AG04450 (cell line): ENCODE measurements at regions of chr5 and their contacts with region 1.

Region 1: DNA sequence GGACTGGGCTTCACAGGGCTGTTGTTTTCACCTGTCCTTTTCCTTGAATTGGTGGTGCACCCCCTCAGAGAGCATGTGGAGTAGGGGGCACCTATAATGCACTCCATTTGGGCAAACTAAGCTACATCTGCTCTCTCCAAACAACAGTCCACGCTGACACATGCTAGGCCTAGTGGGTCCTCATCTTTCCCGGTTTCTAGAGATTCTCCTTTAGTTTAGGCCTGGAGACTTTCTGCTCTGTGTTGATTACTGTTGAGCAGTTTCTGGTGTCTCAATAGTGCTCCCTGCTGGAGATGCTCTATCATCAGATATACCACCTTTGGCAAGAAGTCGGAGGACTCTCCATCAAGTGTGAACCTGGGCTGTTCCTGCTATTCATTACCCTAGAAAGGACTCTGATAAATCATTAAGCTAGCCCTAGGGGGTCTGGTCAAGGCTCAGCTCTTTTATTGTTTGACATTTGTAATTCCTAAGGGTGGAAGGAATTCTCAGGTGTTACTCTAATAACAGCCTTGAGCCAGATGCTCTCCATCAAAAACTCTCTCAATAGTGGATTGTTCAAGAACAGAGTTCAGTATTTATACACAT is 64.0 kb upstream of the FYB1 start:
- DNase-seq: peak; percentile 29
- H3K4me3 ChIP-seq: no peak overlapping the region
- H3K27ac ChIP-seq: no peak overlapping the region
- H3K27me3 ChIP-seq: no peaks in the 10 kb centered on the region
- CTCF ChIP-seq: peak; percentile 81

Region 2: GRCh38 chr5:37665889-37666288 is 1617.4 kb before region 1 on chr5:
- CTCF ChIA-PET with region 1: no interaction called
- POLR2A ChIA-PET with region 1: no interaction called
- DNase-seq: no peak
- H3K4me3 ChIP-seq: no peak overlapping the region
- H3K27ac ChIP-seq: no peak overlapping the region
- H3K27me3 ChIP-seq: no peaks in the 10 kb centered on the region
- CTCF ChIP-seq: no peak

Region 3: DNA sequence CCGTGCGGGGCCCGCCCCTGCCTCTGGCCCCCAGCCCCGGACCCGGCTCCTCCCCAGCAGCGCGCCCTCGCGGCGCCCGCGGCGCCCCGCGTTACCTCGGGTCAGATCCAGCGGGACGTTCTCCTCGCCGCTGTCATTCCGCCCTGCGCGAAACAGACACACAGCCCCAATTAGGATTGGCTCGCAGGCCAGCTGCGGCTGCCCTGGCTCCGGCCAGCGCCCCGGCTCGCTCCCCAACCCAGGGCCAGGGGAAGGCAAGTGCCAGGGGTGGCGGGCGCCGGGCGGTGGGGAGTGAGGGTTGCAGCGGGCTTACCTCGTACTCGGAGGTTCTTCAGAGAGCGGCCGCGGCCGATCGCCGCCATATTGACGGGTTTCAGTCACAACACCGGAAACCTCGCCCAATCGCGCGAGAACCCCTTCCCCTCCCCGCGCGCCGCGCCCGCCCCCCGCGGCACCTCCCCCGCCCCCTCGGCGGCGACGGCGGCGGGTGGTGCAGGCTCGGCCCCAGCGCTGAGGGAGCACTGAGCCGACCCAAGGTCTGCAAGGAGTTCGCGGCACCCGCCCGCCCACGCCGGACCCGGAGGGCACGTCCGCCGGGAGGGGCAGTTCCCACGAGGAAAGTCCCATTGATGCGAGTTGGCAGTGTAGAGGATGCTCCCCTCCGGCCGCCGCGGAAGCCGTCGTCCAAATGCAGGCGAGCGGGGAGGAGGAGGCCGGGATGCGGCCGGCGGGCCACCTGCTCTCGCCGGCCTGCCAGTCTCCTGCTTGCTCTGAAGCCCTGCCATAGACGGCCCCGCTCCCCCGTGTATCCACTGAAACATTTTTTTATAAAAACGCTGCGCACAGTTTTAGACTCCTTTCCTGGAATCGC is 209.1 kb before region 1 on chr5 and contains the start of gene RICTOR:
- CTCF ChIA-PET with region 1: interaction called, 16 read pairs
- POLR2A ChIA-PET with region 1: no interaction called
- DNase-seq: peak; percentile 41
- H3K4me3 ChIP-seq: peak within 1 kb of the TSS; percentile 86
- H3K27ac ChIP-seq: peak within 1 kb of the TSS; percentile 89
- H3K27me3 ChIP-seq: no peaks in the 10 kb centered on the region
- CTCF ChIP-seq: no peak
- polyA plus RNA-seq, gene RICTOR: 9.9 and 15.6 TPM in 2 replicates

Region 4: DNA sequence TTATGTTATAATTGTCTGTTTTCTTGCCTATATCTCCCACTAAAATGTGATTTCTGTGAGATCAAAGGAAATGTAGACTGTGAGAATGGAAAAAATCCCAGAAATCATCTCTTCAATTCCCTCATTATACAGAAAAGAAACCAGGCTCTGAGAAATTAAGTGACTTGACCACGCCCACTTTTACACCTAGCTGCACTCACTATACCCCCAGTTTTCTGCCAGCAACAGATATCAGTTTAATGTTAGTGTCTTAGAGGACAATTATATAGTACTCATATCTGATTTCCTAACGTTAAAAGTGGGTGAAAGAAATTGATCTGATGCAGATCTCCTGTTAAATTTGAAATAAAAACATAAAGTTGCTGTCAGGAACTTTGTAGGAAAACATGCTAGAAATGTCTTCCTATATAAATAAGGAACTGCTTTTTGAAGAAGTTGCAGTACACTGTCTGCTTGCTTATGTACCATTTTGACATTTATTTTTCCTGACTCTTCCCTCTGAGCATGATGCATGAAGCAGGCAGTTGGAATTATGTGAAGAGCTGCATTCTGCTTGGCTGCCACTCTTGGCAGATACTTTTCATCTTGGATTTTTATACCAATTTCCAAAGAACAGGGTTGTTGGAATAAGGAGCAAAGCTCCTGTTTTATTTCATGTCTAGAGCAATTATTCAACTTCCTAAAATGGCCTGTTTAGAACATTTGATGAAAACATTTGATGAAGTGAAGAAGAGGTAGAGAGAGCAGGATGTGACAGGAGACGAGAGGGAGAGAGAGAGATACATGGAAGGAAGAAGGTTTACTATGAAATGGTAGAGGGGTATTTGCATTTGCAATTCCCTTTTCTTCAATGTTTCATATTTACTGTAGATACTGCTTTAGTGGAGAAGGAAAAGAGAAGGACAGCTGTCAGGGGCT is 151.9 kb before region 1 on chr5:
- CTCF ChIA-PET with region 1: no interaction called
- POLR2A ChIA-PET with region 1: no interaction called
- DNase-seq: no peak
- H3K4me3 ChIP-seq: no peak overlapping the region
- H3K27ac ChIP-seq: no peak overlapping the region
- H3K27me3 ChIP-seq: no peaks in the 10 kb centered on the region
- CTCF ChIP-seq: no peak

Region 5: GRCh38 chr5:39148983-39149534 is 134.3 kb before region 1 on chr5:
- CTCF ChIA-PET with region 1: interaction called, 18 read pairs
- POLR2A ChIA-PET with region 1: no interaction called
- DNase-seq: no peak
- H3K4me3 ChIP-seq: no peak overlapping the region
- H3K27ac ChIP-seq: no peak overlapping the region
- H3K27me3 ChIP-seq: no peaks in the 10 kb centered on the region
- CTCF ChIP-seq: peak; percentile 45

Region 6: GRCh38 chr5:39194466-39195136 is 88.7 kb before region 1 on chr5:
- CTCF ChIA-PET with region 1: interaction called, 13 read pairs
- POLR2A ChIA-PET with region 1: no interaction called
- DNase-seq: peak; percentile 46
- H3K4me3 ChIP-seq: no peak overlapping the region
- H3K27ac ChIP-seq: no peak overlapping the region
- H3K27me3 ChIP-seq: no peaks in the 10 kb centered on the region
- CTCF ChIP-seq: no peak

Region 7: DNA sequence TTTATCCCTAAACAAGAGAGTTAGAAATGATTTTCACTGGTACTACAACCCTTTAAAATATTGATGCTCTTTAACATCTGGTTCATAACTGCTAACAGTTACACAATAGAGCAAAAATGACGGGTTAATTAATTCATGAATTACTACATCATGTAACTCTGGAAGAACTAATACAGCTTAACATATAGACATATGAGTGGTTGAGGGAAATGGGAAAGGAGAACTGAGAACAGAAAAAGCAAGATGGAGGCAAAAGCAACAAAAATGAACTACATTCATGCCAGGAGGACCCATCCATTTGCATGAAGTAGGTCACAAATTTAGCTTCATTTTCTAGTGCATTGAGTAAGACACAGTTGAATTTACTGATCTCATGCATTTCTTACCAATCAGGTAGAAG is 19.1 kb after region 1 on chr5:
- CTCF ChIA-PET with region 1: interaction called, 14 read pairs
- POLR2A ChIA-PET with region 1: no interaction called
- DNase-seq: no peak
- H3K4me3 ChIP-seq: no peak overlapping the region
- H3K27ac ChIP-seq: no peak overlapping the region
- H3K27me3 ChIP-seq: no peaks in the 10 kb centered on the region
- CTCF ChIP-seq: no peak